GM18951 (cell line): ENCODE measurements at regions of chr13 and their contacts with region 1.

Region 1: DNA sequence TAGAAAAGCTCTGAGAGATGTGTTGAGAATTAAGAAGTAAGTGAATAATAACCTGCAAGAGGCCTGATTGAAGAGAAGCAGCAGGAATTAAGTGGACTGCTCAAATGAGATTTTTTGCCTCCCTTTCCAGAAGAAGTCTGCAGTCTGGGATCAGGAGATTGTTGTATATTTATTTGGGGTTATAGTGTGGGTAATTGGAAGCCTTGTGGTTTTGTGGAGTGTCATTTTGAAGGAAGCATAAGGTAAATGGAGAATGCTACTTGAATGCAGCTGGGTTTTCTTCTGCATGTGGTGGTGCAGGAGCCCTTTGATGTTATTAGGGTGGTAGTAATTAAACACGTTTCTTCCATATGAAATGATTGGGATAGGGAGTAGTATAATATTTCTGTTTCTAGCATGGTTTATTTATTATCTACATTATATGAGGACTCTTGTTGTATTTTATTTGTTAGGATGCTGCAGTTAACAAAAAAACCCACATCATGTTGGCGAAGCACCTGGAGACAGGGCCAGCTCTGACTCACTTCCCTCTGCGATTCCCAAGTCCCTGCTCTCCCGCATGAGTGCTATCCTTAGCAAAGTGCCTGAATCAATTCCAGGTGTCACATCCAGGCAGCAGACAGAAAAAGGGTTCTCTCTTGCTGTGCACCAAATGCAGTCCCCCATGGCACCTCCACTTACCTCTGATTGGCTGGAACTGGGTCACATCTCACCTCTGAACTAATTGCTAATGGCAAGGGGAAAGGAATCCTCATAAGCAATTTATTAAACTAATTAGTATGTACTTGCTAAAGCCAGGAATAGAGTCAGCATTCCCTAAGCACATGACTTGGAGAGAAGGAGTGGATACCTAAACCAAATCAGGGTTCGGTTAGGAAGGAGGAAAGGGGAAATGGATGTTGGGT is 54.8 kb downstream of the DGKH start:
- POLR2A ChIP-seq: no peak

Region 2: DNA sequence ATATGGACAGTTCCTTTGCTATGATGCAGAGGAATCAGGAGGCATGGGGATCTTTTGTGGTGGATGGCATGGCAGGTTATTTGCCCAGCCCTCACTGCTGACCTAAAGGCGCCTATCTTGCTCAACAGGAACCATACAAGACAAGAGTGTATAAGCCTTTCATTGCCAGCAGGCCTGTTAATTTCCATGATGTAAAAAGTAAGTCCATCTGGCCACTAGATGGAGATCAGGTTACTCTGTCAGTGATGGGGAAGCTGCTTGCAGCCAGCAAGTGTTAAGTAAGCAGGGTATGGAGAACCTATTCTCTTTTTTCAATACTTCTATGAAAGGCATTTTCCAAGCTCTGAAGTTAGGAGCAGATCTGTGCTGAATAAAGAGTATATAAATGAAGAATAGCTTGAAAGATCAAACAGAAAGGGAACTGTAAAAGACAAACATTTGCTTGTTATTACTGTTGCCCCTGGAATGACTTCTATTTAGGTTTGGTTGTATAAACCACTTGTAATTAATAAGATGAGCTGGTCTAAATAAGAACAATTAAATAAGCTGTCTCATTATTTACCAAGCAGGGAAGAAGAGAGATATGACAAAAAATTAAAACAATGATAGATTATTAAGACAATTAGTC is 435.0 kb before region 1 on chr13:
- in situ Hi-C with region 1: loop called (anchors 10 kb)
- POLR2A ChIP-seq: no peak

Region 3: GRCh38 chr13:41905600-41906254 is 197.5 kb before region 1 on chr13:
- in situ Hi-C with region 1: loop called (anchors 10 kb)
- POLR2A ChIP-seq: no peak